GM12878 (cell line): ENCODE measurements at regions of chr19 and their contacts with region 1.

Region 1: DNA sequence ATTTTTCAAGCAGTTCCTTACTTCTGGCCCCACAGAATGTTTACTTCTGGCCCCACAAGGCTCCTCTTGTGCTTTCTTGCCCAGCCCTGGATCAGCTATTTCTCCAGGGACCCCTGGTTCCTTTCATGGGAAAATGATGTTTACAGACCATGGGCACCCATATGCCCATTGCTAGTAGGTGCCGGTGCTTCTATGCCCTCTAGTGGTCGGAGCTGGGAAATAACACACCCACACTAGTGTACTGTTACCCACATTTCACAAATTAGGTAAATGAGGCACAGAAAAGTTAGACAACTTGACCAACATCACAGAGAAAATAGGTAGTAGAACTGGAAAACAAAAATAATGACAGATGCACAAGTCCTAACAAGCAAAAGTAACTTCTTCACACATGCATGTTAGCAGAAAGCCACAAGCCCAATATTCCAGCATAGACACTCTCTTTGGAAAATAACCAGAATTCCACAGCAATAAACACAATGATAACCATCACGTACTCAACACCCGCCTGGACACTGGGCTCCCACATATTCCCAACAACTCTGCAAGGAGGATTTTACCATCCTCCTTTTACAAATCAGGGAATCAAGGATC is 1.3 kb upstream of the CEACAM6 start:
- DNase-seq: no peak
- ATAC-seq: peak; percentile 99
- H3K4me3 ChIP-seq: no peak overlapping the region
- H3K27ac ChIP-seq: no peak overlapping the region
- H3K4me1 ChIP-seq: no peaks in the 10 kb centered on the region
- H3K27me3 ChIP-seq: peaks cover 0 to 2% of the 10 kb centered on the region in 2 experiments; a peak in 2 of 4 replicates
- CTCF ChIP-seq: peak; percentile 52 to 79 (median 65)
- EP300 ChIP-seq: no peak
- POLR2A ChIP-seq: no peak
- RAD21 ChIP-seq: 0 out of 2 replicates have a peak, but pooled peaks have one; percentile 23

Region 2: GRCh38 chr19:41641879-41642485 is 112.1 kb before region 1 on chr19:
- CTCF ChIA-PET with region 1: interaction called, 25 read pairs
- POLR2A ChIA-PET with region 1: no interaction called
- RAD21 ChIA-PET with region 1: interaction called, 3 read pairs
- SMC1A ChIA-PET with region 1: interaction called, 6 read pairs
- in situ Hi-C with region 1: no loop called
- intact Hi-C with region 1: no loop called
- DNase-seq: peak; percentile 4
- ATAC-seq: peak; percentile 88
- H3K4me3 ChIP-seq: no peak overlapping the region
- H3K27ac ChIP-seq: no peak overlapping the region
- H3K4me1 ChIP-seq: no peaks in the 10 kb centered on the region
- H3K27me3 ChIP-seq: no peaks in the 10 kb centered on the region; a peak in 2 of 4 replicates
- CTCF ChIP-seq: peak; percentile 86 to 94 (median 93)
- EP300 ChIP-seq: no peak
- POLR2A ChIP-seq: no peak
- RAD21 ChIP-seq: peak; percentile 82

Region 3: GRCh38 chr19:41706741-41707501 is 47.1 kb before region 1 on chr19:
- CTCF ChIA-PET with region 1: interaction called, 10 read pairs
- POLR2A ChIA-PET with region 1: no interaction called
- RAD21 ChIA-PET with region 1: no interaction called
- SMC1A ChIA-PET with region 1: no interaction called
- in situ Hi-C with region 1: no loop called
- intact Hi-C with region 1: no loop called
- DNase-seq: peak; percentile 3
- ATAC-seq: peak; percentile 98
- H3K4me3 ChIP-seq: no peak overlapping the region
- H3K27ac ChIP-seq: no peak overlapping the region
- H3K4me1 ChIP-seq: no peaks in the 10 kb centered on the region
- H3K27me3 ChIP-seq: peaks cover 3% of the 10 kb centered on the region in 2 experiments
- CTCF ChIP-seq: peak; percentile 51 to 93 (median 58); a peak in 5 of 6 replicates
- EP300 ChIP-seq: no peak
- POLR2A ChIP-seq: no peak
- RAD21 ChIP-seq: no peak

Region 4: GRCh38 chr19:41740415-41741243 is 13.4 kb before region 1 on chr19:
- CTCF ChIA-PET with region 1: interaction called, 17 read pairs
- POLR2A ChIA-PET with region 1: no interaction called
- RAD21 ChIA-PET with region 1: no interaction called
- SMC1A ChIA-PET with region 1: no interaction called
- in situ Hi-C with region 1: no loop called
- intact Hi-C with region 1: no loop called
- DNase-seq: no peak
- ATAC-seq: no peak
- H3K4me3 ChIP-seq: no peak overlapping the region
- H3K27ac ChIP-seq: no peak overlapping the region
- H3K4me1 ChIP-seq: no peaks in the 10 kb centered on the region
- H3K27me3 ChIP-seq: no peaks in the 10 kb centered on the region; a peak in 1 of 4 replicates
- CTCF ChIP-seq: no peak
- EP300 ChIP-seq: no peak
- POLR2A ChIP-seq: no peak
- RAD21 ChIP-seq: no peak

Region 5: DNA sequence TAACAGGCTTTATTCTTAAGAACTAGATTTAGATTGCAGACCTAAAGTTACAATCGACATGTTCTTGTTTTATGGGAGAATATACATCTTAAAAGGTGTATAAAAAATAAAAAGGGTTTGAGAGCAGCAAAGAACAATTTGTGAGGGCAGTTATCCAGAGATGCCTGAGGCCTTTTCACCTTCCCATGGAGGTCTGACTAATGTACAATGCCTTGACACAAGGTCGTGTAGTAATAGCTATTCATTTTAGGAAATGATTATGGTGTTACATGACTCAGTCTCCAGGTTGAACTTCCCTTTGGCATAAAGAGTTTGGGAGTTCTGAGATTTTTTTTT is 21.3 kb after region 1 on chr19:
- CTCF ChIA-PET with region 1: interaction called, 26 read pairs
- POLR2A ChIA-PET with region 1: no interaction called
- RAD21 ChIA-PET with region 1: no interaction called
- SMC1A ChIA-PET with region 1: interaction called, 6 read pairs
- in situ Hi-C with region 1: no loop called
- intact Hi-C with region 1: no loop called
- DNase-seq: no peak
- ATAC-seq: no peak
- H3K4me3 ChIP-seq: no peak overlapping the region
- H3K27ac ChIP-seq: no peak overlapping the region
- H3K4me1 ChIP-seq: no peaks in the 10 kb centered on the region
- H3K27me3 ChIP-seq: no peaks in the 10 kb centered on the region; a peak in 3 of 4 replicates
- CTCF ChIP-seq: no peak
- EP300 ChIP-seq: no peak
- POLR2A ChIP-seq: no peak
- RAD21 ChIP-seq: no peak

Region 6: GRCh38 chr19:41785653-41786052 is 31.6 kb after region 1 on chr19:
- CTCF ChIA-PET with region 1: interaction called, 76 read pairs
- POLR2A ChIA-PET with region 1: interaction called, 4 read pairs
- RAD21 ChIA-PET with region 1: interaction called, 3 read pairs
- SMC1A ChIA-PET with region 1: interaction called, 13 read pairs
- in situ Hi-C with region 1: no loop called
- intact Hi-C with region 1: loop called (anchors 1 kb)
- DNase-seq: peak; percentile 35
- ATAC-seq: peak; percentile 93
- H3K4me3 ChIP-seq: no peak overlapping the region
- H3K27ac ChIP-seq: no peak overlapping the region
- H3K4me1 ChIP-seq: peaks cover 5% of the 10 kb centered on the region
- H3K27me3 ChIP-seq: no peaks in the 10 kb centered on the region; a peak in 2 of 4 replicates
- CTCF ChIP-seq: peak; percentile 72 to 87 (median 87)
- EP300 ChIP-seq: no peak
- POLR2A ChIP-seq: no peak
- RAD21 ChIP-seq: peak; percentile 72

Region 7: GRCh38 chr19:41821003-41821735 is 67.1 kb after region 1 on chr19:
- CTCF ChIA-PET with region 1: interaction called, 23 read pairs
- POLR2A ChIA-PET with region 1: no interaction called
- RAD21 ChIA-PET with region 1: interaction called, 8 read pairs
- SMC1A ChIA-PET with region 1: interaction called, 11 read pairs
- in situ Hi-C with region 1: no loop called
- intact Hi-C with region 1: loop called (anchors 1 kb)
- DNase-seq: peak; percentile 12
- ATAC-seq: peak; percentile 93
- H3K4me3 ChIP-seq: no peak overlapping the region
- H3K27ac ChIP-seq: no peak overlapping the region
- H3K4me1 ChIP-seq: no peaks in the 10 kb centered on the region
- H3K27me3 ChIP-seq: no peaks in the 10 kb centered on the region
- CTCF ChIP-seq: peak; percentile 69 to 78 (median 72)
- EP300 ChIP-seq: no peak
- POLR2A ChIP-seq: no peak
- RAD21 ChIP-seq: peak; percentile 94